PC-3 (cell line): ENCODE measurements at regions of chr1 and their contacts with region 1.

Region 1: GRCh38 chr1:227094249-227094966 is 154.3 kb downstream of the COQ8A start:
- DNase-seq: peak; percentile 92
- ATAC-seq: peak; percentile 83
- H3K4me3 ChIP-seq: peak overlapping the region; percentile 2; the same call in 1 of the 2 replicates
- H3K27ac ChIP-seq: peak overlapping the region; percentile 77
- H3K4me1 ChIP-seq: peaks cover 24% of the 10 kb centered on the region
- H3K27me3 ChIP-seq: no peaks in the 10 kb centered on the region
- CTCF ChIP-seq: no peak

Region 2: GRCh38 chr1:226870401-226871279 is 223.8 kb before region 1 on chr1 and contains the start of gene PSEN2:
- CTCF ChIA-PET with region 1: no interaction called
- POLR2A ChIA-PET with region 1: no interaction called
- intact Hi-C with region 1: loop called (anchors 5 kb)
- DNase-seq: peak; percentile 92
- ATAC-seq: peak; percentile 74
- H3K4me3 ChIP-seq: peak within 1 kb of the TSS; percentile 81
- H3K27ac ChIP-seq: peak within 1 kb of the TSS; percentile 13
- H3K4me1 ChIP-seq: peaks cover 49% of the 10 kb centered on the region
- H3K27me3 ChIP-seq: no peaks in the 10 kb centered on the region
- CTCF ChIP-seq: peak; percentile 33; the same call in 1 of the 2 replicates
- total RNA-seq, gene PSEN2: 85.3 and 103 TPM in 2 replicates

Region 3: DNA sequence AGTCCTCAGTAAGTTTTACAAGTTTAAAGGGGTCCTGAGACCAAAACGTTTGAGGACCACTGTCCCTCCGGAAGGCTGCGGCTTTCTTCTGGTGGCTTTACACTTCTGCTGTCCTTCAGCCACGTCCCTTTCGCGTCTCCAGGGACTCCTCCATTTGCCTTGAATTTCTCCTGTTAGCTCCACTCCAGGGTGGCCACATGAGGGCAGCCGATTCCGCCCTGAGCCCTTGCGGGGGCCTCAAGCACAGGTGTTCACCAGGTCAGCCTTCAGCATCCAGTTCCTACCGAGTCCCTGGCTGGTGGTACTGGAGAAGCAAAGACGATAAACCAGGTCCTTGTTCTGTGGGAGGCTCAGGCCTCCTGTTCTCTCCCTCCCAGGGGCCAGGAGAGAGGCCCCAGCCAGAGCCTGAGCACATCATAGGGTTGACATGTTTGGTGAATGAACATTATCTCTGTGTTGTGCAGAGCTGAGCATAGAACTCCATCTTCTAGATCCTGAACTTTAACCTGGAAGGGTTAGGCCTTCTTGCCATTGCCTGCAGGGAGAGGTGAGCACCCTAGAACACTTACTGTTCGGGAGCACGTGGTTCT is 181.7 kb before region 1 on chr1:
- CTCF ChIA-PET with region 1: no interaction called
- POLR2A ChIA-PET with region 1: no interaction called
- intact Hi-C with region 1: loop called (anchors 5 kb)
- DNase-seq: peak; percentile 60
- ATAC-seq: peak; percentile 83
- H3K4me3 ChIP-seq: no peak overlapping the region
- H3K27ac ChIP-seq: no peak overlapping the region
- H3K4me1 ChIP-seq: no peaks in the 10 kb centered on the region
- H3K27me3 ChIP-seq: no peaks in the 10 kb centered on the region
- CTCF ChIP-seq: peak; percentile 83

Region 4: DNA sequence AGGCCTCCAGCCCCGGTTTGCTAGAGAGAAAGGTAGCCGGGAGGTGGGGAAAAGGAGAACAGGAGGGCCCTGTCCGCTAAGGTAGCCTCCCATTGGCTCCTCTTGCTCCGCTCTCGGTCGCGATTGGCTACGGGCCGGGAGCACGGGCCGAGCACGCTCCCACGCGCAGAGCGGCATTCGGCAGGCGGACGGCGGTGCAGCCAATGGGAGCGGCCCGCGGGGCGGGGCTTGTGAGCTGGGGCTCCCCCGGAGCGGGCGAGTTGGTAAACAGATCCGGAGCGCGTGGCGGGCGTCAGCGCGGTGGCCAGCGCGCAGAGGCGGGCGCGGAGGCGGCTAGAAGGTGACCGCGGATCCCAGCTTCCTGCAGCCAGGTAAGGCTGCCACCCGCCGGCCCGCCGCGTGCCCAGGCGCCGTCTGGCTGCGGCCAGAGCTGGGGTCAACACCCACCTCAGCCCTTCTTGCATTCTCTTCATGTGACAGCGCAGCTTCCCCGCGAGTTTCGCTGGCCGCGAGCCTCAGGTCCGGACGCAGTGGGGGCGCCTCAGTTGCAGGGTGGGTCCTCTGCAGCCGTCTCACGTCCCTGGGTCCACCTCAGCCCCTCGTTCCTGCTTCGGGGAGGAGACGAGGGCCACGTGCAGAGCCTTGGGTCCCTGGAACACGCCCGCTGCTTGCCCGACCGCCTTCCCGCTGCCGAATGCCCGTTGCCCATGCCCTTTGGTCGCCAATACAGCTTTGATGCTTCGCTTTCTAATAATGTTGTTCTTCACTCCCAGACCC is 154.2 kb before region 1 on chr1 and contains the start of gene COQ8A:
- CTCF ChIA-PET with region 1: no interaction called
- POLR2A ChIA-PET with region 1: interaction called, 7 read pairs
- intact Hi-C with region 1: loop called (anchors 10 kb)
- DNase-seq: peak; percentile 100
- ATAC-seq: peak; percentile 94
- H3K4me3 ChIP-seq: peak within 1 kb of the TSS; percentile 79
- H3K27ac ChIP-seq: peak within 1 kb of the TSS; percentile 87
- H3K4me1 ChIP-seq: peaks cover 27% of the 10 kb centered on the region
- H3K27me3 ChIP-seq: no peaks in the 10 kb centered on the region
- CTCF ChIP-seq: no peak
- total RNA-seq, gene COQ8A: 67.0 and 73.3 TPM in 2 replicates

Region 5: GRCh38 chr1:227072991-227073390 is 21.4 kb before region 1 on chr1:
- CTCF ChIA-PET with region 1: no interaction called
- POLR2A ChIA-PET with region 1: no interaction called
- intact Hi-C with region 1: loop called (anchors 1 kb)
- DNase-seq: peak; percentile 92
- ATAC-seq: peak; percentile 96
- H3K4me3 ChIP-seq: peak overlapping the region; percentile 52
- H3K27ac ChIP-seq: peak overlapping the region; percentile 74
- H3K4me1 ChIP-seq: peaks cover 19% of the 10 kb centered on the region
- H3K27me3 ChIP-seq: no peaks in the 10 kb centered on the region
- CTCF ChIP-seq: no peak

Region 6: GRCh38 chr1:227134686-227135314 is 40.4 kb after region 1 on chr1:
- CTCF ChIA-PET with region 1: no interaction called
- POLR2A ChIA-PET with region 1: no interaction called
- intact Hi-C with region 1: no loop called
- DNase-seq: no peak
- ATAC-seq: no peak
- H3K4me3 ChIP-seq: no peak overlapping the region
- H3K27ac ChIP-seq: no peak overlapping the region
- H3K4me1 ChIP-seq: no peaks in the 10 kb centered on the region
- H3K27me3 ChIP-seq: no peaks in the 10 kb centered on the region
- CTCF ChIP-seq: no peak

Region 7: GRCh38 chr1:227156520-227156919 is 62.1 kb after region 1 on chr1:
- CTCF ChIA-PET with region 1: no interaction called
- POLR2A ChIA-PET with region 1: no interaction called
- intact Hi-C with region 1: no loop called
- DNase-seq: no peak
- ATAC-seq: no peak
- H3K4me3 ChIP-seq: no peak overlapping the region
- H3K27ac ChIP-seq: no peak overlapping the region
- H3K4me1 ChIP-seq: peaks cover 11% of the 10 kb centered on the region; the same call in 1 of the 2 replicates
- H3K27me3 ChIP-seq: no peaks in the 10 kb centered on the region
- CTCF ChIP-seq: no peak